ENCODE measurements at regions of chr2 and their contacts with region 1.

Region 1: DNA sequence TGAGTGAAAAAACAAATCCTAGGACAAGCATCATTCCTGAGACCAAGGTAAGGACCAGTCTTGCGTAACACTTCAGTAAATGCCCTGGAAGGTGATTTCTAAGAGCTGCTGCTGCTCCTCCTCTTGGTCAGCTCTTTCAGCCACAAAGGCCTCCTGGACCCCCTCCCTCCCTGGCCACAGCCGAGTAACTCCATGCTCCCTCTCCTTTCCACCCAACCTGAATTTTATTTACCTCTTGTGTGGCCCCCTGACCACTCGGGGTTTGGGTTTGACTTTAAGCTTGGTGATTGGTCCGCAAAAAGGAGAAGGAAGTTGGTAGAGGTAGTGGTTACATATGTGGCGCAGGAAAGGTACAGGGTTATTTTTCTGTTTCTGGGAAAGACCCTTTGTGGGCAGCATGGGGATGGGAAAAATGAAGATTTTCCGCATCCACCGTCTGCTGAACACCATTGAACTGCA is 9.2 kb downstream of the HTRA2 start:
- DNase-seq: no peak
- ATAC-seq: peak; percentile 77
- H3K4me3 Mint-ChIP-seq: peak overlapping the region; percentile 81
- H3K27ac Mint-ChIP-seq: peak overlapping the region; percentile 89
- H3K4me1 Mint-ChIP-seq: peaks cover 31% of the 10 kb centered on the region
- H3K27me3 Mint-ChIP-seq: no peaks in the 10 kb centered on the region
- CTCF ChIP-seq: no peak

Region 2: DNA sequence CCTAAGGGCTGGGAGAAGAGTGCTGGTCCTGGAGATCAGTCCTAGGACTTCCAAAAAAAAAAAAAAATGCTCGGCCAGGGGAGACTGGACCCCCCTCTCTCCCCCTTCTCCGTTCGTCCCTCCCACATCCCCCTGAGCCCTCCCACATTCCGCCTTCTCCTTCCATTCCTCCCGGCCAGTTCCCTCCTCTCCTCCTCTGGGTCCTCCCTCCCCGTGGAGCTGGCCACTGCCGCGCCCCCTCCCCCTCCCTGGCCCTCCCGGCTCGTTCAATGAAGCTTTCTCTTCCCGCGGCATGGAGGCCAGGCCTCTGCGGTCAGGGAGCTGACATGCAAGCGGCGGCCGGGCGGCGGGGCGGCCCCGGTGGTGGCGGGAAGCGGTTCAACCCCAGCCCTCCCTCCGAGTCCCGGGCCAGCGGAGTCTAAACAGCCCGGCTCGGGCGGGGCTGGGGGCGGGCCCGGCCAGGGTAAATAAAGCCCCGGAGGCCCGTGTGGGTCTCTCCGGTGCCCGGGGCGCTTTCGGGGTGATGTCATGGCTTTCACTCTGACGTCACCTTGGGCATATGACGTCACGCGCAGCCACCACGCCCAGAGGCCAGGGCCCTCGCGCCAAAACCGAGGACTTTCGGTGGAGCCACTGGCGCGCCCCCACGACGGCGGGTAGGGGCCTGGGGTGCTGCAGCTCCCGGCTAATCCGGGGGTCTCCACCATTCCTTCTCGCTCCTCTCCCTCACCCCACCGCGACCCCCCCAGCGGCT is 15.2 kb after region 1 on chr2 and contains the start of gene LOXL3:
- CTCF ChIA-PET with region 1: no interaction called
- POLR2A ChIA-PET with region 1: interaction called, 10 read pairs
- intact Hi-C with region 1: no loop called
- DNase-seq: peak; percentile 83
- ATAC-seq: peak; percentile 51
- H3K4me3 Mint-ChIP-seq: peak within 1 kb of the TSS; percentile 97
- H3K27ac Mint-ChIP-seq: peak within 1 kb of the TSS; percentile 90
- H3K4me1 Mint-ChIP-seq: peaks cover 32% of the 10 kb centered on the region
- H3K27me3 Mint-ChIP-seq: peaks cover 7% of the 10 kb centered on the region
- CTCF ChIP-seq: no peak
- total RNA-seq, gene LOXL3: 1.4 and 2.3 TPM in 2 replicates

Measured in activated B cell treated with CpG ODN at 0.5 μM for 24 hours (primary cell).